GM18951 (cell line): ENCODE measurements at regions of chr9 and their contacts with region 1.

Region 1: DNA sequence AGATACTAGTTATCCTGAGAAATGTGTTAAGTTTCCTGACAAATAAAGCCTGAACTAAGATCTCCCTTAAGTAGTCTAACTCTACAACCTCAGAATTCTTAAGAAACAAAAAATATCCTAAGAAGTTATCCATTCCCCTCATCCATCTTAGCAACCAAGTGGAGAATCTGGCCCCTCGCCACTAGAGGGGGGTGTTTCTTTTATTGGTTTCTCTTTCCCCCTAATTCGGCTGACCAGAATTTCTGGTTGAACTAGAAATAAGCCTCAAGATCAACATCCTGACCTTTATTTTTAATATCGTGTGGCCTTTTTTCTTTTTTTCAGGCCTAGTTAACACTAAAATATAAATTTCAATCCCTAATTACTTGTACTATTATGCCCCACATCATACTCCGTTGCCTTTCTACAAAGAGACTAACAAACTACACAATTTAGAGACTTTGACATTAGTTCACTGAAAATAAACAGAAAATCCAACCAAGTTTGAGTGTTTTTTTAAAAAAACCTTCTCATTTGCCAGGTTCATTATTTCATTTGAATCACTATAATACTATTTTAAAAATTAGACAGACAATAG is 14.3 kb upstream of the NR4A3 start:
- POLR2A ChIP-seq: no peak

Region 2: GRCh38 chr9:99999797-100000196 is 192.4 kb after region 1 on chr9:
- in situ Hi-C with region 1: loop called (anchors 10 kb)
- POLR2A ChIP-seq: no peak

Region 3: GRCh38 chr9:100066539-100066938 is 259.2 kb after region 1 on chr9:
- in situ Hi-C with region 1: no loop called
- POLR2A ChIP-seq: no peak